SK-N-SH (cell line): ENCODE measurements at regions of chr10 and their contacts with region 1.

Region 1: DNA sequence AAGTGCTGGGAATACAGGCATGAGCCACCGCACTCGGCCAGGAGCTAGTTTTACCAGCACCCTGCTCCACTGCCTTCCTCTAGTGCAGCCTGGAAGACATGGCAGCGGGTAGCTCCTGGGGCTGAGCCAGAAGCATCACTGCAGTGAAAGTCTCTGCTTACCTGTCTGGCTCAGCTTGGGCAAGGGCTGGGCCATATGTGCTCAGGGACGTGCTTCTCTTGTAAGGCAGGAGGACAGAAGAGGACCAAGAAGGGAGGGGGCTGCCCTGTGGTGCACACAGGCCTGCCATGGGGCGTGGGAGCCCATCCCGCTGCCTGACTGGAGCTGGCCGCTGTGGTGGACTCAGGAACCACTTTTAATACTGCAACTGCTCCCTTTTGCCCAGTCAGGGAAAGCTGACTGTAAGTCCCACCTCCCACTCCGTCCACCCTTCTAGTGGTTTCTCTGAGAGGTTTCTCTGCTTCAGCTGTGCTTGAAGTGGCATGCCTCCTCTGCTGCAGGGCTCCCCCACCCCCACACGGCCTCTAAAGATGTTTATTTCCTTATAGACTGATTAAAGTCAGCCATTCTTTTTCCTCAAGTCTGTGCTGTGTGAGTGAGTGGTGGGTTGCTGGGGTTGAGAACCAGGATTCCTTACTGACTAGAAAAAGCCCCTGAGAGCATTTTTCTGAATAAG is 25.3 kb upstream of the C10orf95 start:
- DNase-seq: no peak
- H3K4me3 ChIP-seq: no peak overlapping the region
- H3K27ac ChIP-seq: no peak overlapping the region
- H3K4me1 ChIP-seq: no peaks in the 10 kb centered on the region
- H3K27me3 ChIP-seq: no peaks in the 10 kb centered on the region
- CTCF ChIP-seq: no peak
- EP300 ChIP-seq: no peak
- RAD21 ChIP-seq: no peak

Region 2: GRCh38 chr10:102394079-102394800 is 82.4 kb before region 1 on chr10:
- CTCF ChIA-PET with region 1: interaction called, 28 read pairs
- POLR2A ChIA-PET with region 1: interaction called, 3 read pairs
- DNase-seq: peak; percentile 92
- H3K4me3 ChIP-seq: peak overlapping the region; percentile 65 to 77
- H3K27ac ChIP-seq: peak overlapping the region; percentile 47 to 81; a peak in 3 of 4 replicates
- H3K4me1 ChIP-seq: peaks cover 0 to 17% of the 10 kb centered on the region in 2 experiments; a peak in 1 of 4 replicates
- H3K27me3 ChIP-seq: no peaks in the 10 kb centered on the region
- CTCF ChIP-seq: no peak; the same call in 1 of the 2 replicates
- EP300 ChIP-seq: no peak
- RAD21 ChIP-seq: no peak

Region 3: GRCh38 chr10:102408728-102409603 is 67.6 kb before region 1 on chr10:
- CTCF ChIA-PET with region 1: interaction called, 15 read pairs
- POLR2A ChIA-PET with region 1: interaction called, 4 read pairs
- DNase-seq: peak; percentile 91
- H3K4me3 ChIP-seq: peak overlapping the region; percentile 51 to 61
- H3K27ac ChIP-seq: peak overlapping the region in 1 of 2 experiments; percentile 56; a peak in 2 of 4 replicates
- H3K4me1 ChIP-seq: peaks cover 0 to 31% of the 10 kb centered on the region in 2 experiments; a peak in 2 of 4 replicates
- H3K27me3 ChIP-seq: no peaks in the 10 kb centered on the region
- CTCF ChIP-seq: no peak
- EP300 ChIP-seq: no peak
- RAD21 ChIP-seq: no peak

Region 4: DNA sequence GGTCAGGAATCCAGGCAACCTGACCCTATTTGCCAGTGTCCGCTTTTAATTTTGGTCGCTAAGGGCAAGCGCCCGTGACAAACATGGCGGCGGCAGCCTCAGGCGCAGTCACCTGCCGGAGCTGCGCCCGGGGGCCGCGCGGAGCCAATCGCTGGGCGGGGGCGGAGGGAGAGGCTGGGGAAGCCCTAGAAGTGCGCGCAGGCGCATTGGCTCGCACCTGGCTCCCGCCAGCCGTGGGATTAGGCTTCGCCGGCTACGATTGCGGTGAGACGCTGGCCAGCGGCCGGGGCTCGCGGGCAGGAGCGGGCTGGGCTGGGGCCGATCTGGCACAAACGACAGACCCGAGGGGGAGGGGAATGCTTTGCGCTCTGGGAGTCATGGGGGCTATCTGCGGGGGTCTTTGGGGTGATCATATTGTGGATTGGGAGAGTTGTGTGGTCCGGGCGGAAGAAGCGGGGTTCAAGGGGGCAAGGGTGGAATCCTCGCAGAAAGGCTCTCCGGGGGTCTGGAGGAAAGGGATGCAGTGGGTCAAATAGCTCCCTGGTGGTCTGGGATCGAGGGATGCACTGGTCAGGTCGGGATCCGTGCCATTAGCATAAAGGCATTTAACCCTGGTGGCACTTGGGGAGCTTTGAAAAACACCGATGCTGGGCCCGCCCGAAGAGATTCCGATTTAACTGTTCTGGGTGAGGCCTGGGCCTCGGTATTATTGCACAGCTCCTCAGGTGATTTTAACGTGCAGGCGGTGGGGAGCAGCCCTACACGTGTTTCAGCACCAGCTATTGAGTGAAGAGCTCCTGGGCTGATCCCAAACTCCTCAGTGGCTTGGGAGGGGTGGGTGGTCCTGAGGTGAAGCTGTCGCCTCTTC is 15.2 kb before region 1 on chr10:
- CTCF ChIA-PET with region 1: interaction called, 27 read pairs
- POLR2A ChIA-PET with region 1: interaction called, 4 read pairs
- DNase-seq: peak; percentile 99
- H3K4me3 ChIP-seq: peak overlapping the region; percentile 55 to 74
- H3K27ac ChIP-seq: peak overlapping the region in 1 of 2 experiments; percentile 58; a peak in 1 of 4 replicates
- H3K4me1 ChIP-seq: peaks cover 0 to 10% of the 10 kb centered on the region in 2 experiments; a peak in 1 of 4 replicates
- H3K27me3 ChIP-seq: no peaks in the 10 kb centered on the region
- CTCF ChIP-seq: no peak
- EP300 ChIP-seq: no peak
- RAD21 ChIP-seq: no peak

Region 5: GRCh38 chr10:102534333-102534732 is 57.7 kb after region 1 on chr10:
- CTCF ChIA-PET with region 1: no interaction called
- POLR2A ChIA-PET with region 1: no interaction called
- DNase-seq: no peak
- H3K4me3 ChIP-seq: no peak overlapping the region
- H3K27ac ChIP-seq: no peak overlapping the region
- H3K4me1 ChIP-seq: no peaks in the 10 kb centered on the region
- H3K27me3 ChIP-seq: no peaks in the 10 kb centered on the region
- CTCF ChIP-seq: no peak
- EP300 ChIP-seq: no peak
- RAD21 ChIP-seq: no peak

Region 6: GRCh38 chr10:102583435-102584417 is 107.1 kb after region 1 on chr10:
- CTCF ChIA-PET with region 1: interaction called, 13 read pairs
- POLR2A ChIA-PET with region 1: interaction called, 4 read pairs
- DNase-seq: peak; percentile 88
- H3K4me3 ChIP-seq: no peak overlapping the region; a peak in 1 of 4 replicates
- H3K27ac ChIP-seq: no peak overlapping the region; a peak in 1 of 4 replicates
- H3K4me1 ChIP-seq: no peaks in the 10 kb centered on the region; a peak in 1 of 4 replicates
- H3K27me3 ChIP-seq: no peaks in the 10 kb centered on the region
- CTCF ChIP-seq: peak; percentile 90
- EP300 ChIP-seq: no peak
- RAD21 ChIP-seq: peak; percentile 94